Activated CD4-positive, alpha-beta memory T cell treated with anti-CD3 and anti-CD28 coated beads for 36 hours (primary cell): ENCODE measurements at regions of chr21 and their contacts with region 1.

Region 1: GRCh38 chr21:33266050-33266788 is at the start of gene IL10RB:
- DNase-seq: peak; percentile 78
- H3K4me3 Mint-ChIP-seq: peak within 1 kb of the TSS; percentile 99
- H3K27ac Mint-ChIP-seq: peak within 1 kb of the TSS; percentile 97
- H3K4me1 Mint-ChIP-seq: peaks cover 55% of the 10 kb centered on the region
- H3K27me3 Mint-ChIP-seq: no peaks in the 10 kb centered on the region
- total RNA-seq, gene IL10RB: 31.3 to 32.5 TPM

Region 2: GRCh38 chr21:33183430-33183829 is 82.8 kb before region 1 on chr21:
- CTCF ChIA-PET with region 1: no interaction called
- POLR2A ChIA-PET with region 1: no interaction called
- intact Hi-C with region 1: no loop called
- DNase-seq: no peak
- H3K4me3 Mint-ChIP-seq: no peak overlapping the region
- H3K27ac Mint-ChIP-seq: no peak overlapping the region
- H3K4me1 Mint-ChIP-seq: peaks cover 26% of the 10 kb centered on the region
- H3K27me3 Mint-ChIP-seq: no peaks in the 10 kb centered on the region

Region 3: GRCh38 chr21:33205476-33205875 is 60.7 kb before region 1 on chr21:
- CTCF ChIA-PET with region 1: no interaction called
- POLR2A ChIA-PET with region 1: no interaction called
- intact Hi-C with region 1: loop called (anchors 2 kb)
- DNase-seq: peak; percentile 36
- H3K4me3 Mint-ChIP-seq: peak overlapping the region; percentile 63
- H3K27ac Mint-ChIP-seq: peak overlapping the region; percentile 88
- H3K4me1 Mint-ChIP-seq: peaks cover 34% of the 10 kb centered on the region
- H3K27me3 Mint-ChIP-seq: no peaks in the 10 kb centered on the region

Region 4: DNA sequence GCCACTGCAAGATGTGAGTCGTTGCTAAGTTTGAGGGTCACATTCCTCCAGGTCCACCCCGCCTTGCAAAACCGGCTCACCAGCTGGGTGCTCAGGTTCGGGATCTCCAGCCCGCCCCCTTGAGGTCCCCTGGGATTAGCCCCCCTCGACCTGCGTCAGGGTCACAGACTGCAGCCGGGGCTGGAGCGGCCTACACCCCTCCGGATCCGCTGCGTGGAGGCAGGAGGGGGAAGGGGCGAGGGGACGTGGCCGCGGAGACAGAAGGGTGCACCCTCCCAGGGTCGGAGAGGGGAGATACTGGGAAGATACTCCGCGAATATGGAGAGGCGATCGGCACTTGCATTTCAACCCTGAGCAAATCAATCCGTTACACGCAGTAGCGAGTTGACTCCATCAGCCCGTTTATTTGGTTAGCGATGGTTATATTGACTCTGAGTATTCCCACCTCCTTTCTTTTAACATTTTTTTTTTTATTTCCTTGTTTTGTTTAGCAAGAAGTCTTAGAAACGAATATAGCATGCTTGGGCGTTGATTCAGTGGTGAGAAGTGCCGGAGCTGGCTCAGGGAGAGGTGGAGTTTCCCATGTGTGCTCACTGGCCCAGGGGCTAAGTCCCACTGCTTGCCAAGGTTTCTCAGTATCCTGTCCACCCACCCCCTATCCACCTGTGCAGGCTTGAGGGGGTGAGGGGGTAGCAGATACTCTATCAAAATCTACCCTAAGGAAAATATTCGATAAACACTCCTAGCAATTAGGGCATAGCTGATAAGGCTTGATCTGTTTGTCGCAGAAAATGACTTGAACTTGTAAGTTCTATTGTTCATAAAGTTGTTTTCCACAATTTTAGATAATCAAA is 35.4 kb before region 1 on chr21:
- CTCF ChIA-PET with region 1: no interaction called
- POLR2A ChIA-PET with region 1: interaction called, 5 read pairs
- intact Hi-C with region 1: loop called (anchors 1 kb)
- DNase-seq: peak; percentile 48
- H3K4me3 Mint-ChIP-seq: peak overlapping the region; percentile 90
- H3K27ac Mint-ChIP-seq: peak overlapping the region; percentile 91
- H3K4me1 Mint-ChIP-seq: peaks cover 54% of the 10 kb centered on the region
- H3K27me3 Mint-ChIP-seq: no peaks in the 10 kb centered on the region

Region 5: DNA sequence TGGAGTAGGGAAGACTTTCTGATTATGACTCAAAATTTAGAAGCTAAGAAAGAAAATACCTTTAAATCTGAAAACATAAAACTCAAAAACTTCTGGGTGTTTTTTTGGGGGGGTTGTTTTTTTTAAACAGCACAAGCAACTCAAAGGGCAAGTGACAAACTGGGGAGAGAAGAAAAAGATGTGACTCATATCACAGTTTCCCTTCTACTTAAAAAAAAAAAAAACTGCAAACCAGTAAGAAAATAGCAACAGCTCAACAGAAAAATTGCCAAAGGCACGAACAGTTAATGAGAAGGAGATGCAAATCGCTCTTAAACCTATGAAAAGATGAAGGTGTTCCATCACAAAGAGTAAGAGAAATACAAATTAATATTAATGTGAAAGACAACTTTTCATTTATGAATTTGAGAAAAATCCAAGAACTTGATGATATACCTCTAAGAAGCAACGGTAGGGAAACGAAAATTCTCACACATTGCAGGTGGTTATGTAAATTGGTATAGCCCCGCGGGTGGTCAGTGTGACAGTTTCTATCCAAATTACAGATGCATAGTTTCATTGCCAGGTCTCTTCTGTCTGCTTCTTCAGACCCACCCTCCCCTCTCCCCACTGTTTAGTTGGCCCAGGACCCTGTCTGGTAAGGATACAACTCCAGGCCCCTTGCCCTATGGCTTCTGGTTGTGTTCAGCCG is 27.5 kb before region 1 on chr21:
- CTCF ChIA-PET with region 1: interaction called, 3 read pairs
- POLR2A ChIA-PET with region 1: no interaction called
- intact Hi-C with region 1: loop called (anchors 2 kb)
- DNase-seq: peak; percentile 43
- H3K4me3 Mint-ChIP-seq: peak overlapping the region; percentile 40
- H3K27ac Mint-ChIP-seq: peak overlapping the region; percentile 83
- H3K4me1 Mint-ChIP-seq: peaks cover 81% of the 10 kb centered on the region
- H3K27me3 Mint-ChIP-seq: no peaks in the 10 kb centered on the region

Region 6: GRCh38 chr21:33256019-33256418 is 10.2 kb before region 1 on chr21:
- CTCF ChIA-PET with region 1: interaction called, 4 read pairs
- POLR2A ChIA-PET with region 1: interaction called, 6 read pairs
- intact Hi-C with region 1: loop called (anchors 1 kb)
- DNase-seq: peak; percentile 49
- H3K4me3 Mint-ChIP-seq: peak overlapping the region; percentile 8
- H3K27ac Mint-ChIP-seq: peak overlapping the region; percentile 71
- H3K4me1 Mint-ChIP-seq: peaks cover 65% of the 10 kb centered on the region
- H3K27me3 Mint-ChIP-seq: no peaks in the 10 kb centered on the region

Region 7: GRCh38 chr21:33324291-33325221 is 58.3 kb after region 1 on chr21 and contains the start of gene IFNAR1:
- CTCF ChIA-PET with region 1: no interaction called
- POLR2A ChIA-PET with region 1: interaction called, 9 read pairs
- intact Hi-C with region 1: loop called (anchors 1 kb)
- DNase-seq: peak; percentile 99
- H3K4me3 Mint-ChIP-seq: no peak within 1 kb of the TSS
- H3K27ac Mint-ChIP-seq: no peak within 1 kb of the TSS
- H3K4me1 Mint-ChIP-seq: peaks cover 26% of the 10 kb centered on the region
- H3K27me3 Mint-ChIP-seq: no peaks in the 10 kb centered on the region
- total RNA-seq, gene IFNAR1: 28.0 to 32.0 TPM